Naive thymus-derived CD4-positive, alpha-beta T cell (primary cell): ENCODE measurements at regions of chr17 and their contacts with region 1.

Region 1: GRCh38 chr17:39754161-39754951 is 16.6 kb downstream of the GRB7 start:
- DNase-seq: peak; percentile 94 to 99 (median 99)
- ATAC-seq: peak; percentile 90
- H3K4me3 ChIP-seq: peak overlapping the region; percentile 76
- H3K4me3 Mint-ChIP-seq: peak overlapping the region; percentile 63 to 92 (median 82)
- H3K27ac ChIP-seq: peak overlapping the region; percentile 87
- H3K27ac Mint-ChIP-seq: peak overlapping the region; percentile 87 to 99 (median 97)
- H3K4me1 ChIP-seq: peaks cover 43 to 59% of the 10 kb centered on the region in 2 donors
- H3K4me1 Mint-ChIP-seq: peaks cover 37 to 59% (median 53%) of the 10 kb centered on the region in 7 donors
- H3K27me3 ChIP-seq: no peaks in the 10 kb centered on the region
- H3K27me3 Mint-ChIP-seq: no peaks in the 10 kb centered on the region

Region 2: GRCh38 chr17:39527220-39527813 is 227.0 kb before region 1 on chr17:
- CTCF ChIA-PET with region 1: no interaction called
- POLR2A ChIA-PET with region 1: no interaction called
- intact Hi-C with region 1: loop called in 1 of 2 experiments (anchors 1 kb)
- DNase-seq: peak in 5 of 9 donors; percentile 9 to 25 (median 16)
- ATAC-seq: no peak
- H3K4me3 ChIP-seq: no peak overlapping the region
- H3K4me3 Mint-ChIP-seq: no peak overlapping the region
- H3K27ac ChIP-seq: no peak overlapping the region
- H3K27ac Mint-ChIP-seq: no peak overlapping the region
- H3K4me1 ChIP-seq: no peaks in the 10 kb centered on the region
- H3K4me1 Mint-ChIP-seq: peaks cover 0 to 7% (median 0%) of the 10 kb centered on the region in 7 donors
- H3K27me3 ChIP-seq: no peaks in the 10 kb centered on the region
- H3K27me3 Mint-ChIP-seq: no peaks in the 10 kb centered on the region

Region 3: GRCh38 chr17:39668199-39668966 is 86.0 kb before region 1 on chr17 and contains the start of gene PNMT:
- CTCF ChIA-PET with region 1: no interaction called
- POLR2A ChIA-PET with region 1: no interaction called
- intact Hi-C with region 1: loop called in 1 of 2 experiments (anchors 1 kb)
- DNase-seq: peak; percentile 44 to 76 (median 63)
- ATAC-seq: peak; percentile 83
- H3K4me3 ChIP-seq: peak within 1 kb of the TSS; percentile 50
- H3K4me3 Mint-ChIP-seq: peak within 1 kb of the TSS; percentile 50 to 83 (median 68)
- H3K27ac ChIP-seq: peak within 1 kb of the TSS; percentile 51
- H3K27ac Mint-ChIP-seq: peak within 1 kb of the TSS in 1 of 9 donors; percentile 26
- H3K4me1 ChIP-seq: peaks cover 4 to 13% of the 10 kb centered on the region in 2 donors
- H3K4me1 Mint-ChIP-seq: peaks cover 5 to 23% (median 14%) of the 10 kb centered on the region in 7 donors
- H3K27me3 ChIP-seq: no peaks in the 10 kb centered on the region
- H3K27me3 Mint-ChIP-seq: peaks cover 0 to 48% (median 5%) of the 10 kb centered on the region in 5 donors
- total RNA-seq, gene PNMT: 0.42 to 0.89 (median 0.50) TPM in 4 of 5 experiments, not detected in the other

Region 4: GRCh38 chr17:39777534-39778365 is 23.4 kb after region 1 on chr17:
- CTCF ChIA-PET with region 1: interaction called, 14 read pairs
- POLR2A ChIA-PET with region 1: interaction called, 21 read pairs
- intact Hi-C with region 1: loop called in 1 of 2 experiments (anchors 1 kb)
- DNase-seq: peak in 1 of 9 donors; percentile 40
- ATAC-seq: peak; percentile 72
- H3K4me3 ChIP-seq: peak overlapping the region; percentile 74
- H3K4me3 Mint-ChIP-seq: peak overlapping the region; percentile 79 to 95 (median 90)
- H3K27ac ChIP-seq: peak overlapping the region; percentile 77
- H3K27ac Mint-ChIP-seq: peak overlapping the region; percentile 68 to 98 (median 94)
- H3K4me1 ChIP-seq: peaks cover 61 to 75% of the 10 kb centered on the region in 2 donors
- H3K4me1 Mint-ChIP-seq: peaks cover 60 to 91% (median 86%) of the 10 kb centered on the region in 7 donors
- H3K27me3 ChIP-seq: no peaks in the 10 kb centered on the region
- H3K27me3 Mint-ChIP-seq: no peaks in the 10 kb centered on the region

Region 5: DNA sequence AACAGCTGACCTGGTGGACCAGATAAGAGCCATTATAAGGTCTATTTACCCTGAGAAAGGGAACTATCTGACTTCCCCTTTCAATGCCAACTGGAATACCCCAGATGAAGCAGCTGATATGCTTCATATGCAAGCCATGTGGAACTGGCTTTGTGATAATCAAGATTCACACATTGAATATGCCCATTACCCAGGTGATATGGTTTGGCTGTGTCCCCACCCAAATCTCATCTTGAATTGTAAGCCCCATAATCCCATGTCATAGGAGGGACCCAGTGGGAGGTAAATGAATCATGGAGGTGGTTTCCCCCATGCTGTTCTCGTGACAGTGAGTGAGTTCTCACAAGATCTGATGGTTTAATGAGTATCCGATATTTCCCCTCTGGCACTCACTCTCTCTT is 67.7 kb after region 1 on chr17:
- CTCF ChIA-PET with region 1: interaction called, 10 read pairs
- POLR2A ChIA-PET with region 1: interaction called, 16 read pairs
- intact Hi-C with region 1: loop called in 1 of 2 experiments (anchors 2 kb)
- DNase-seq: no peak
- ATAC-seq: no peak
- H3K4me3 ChIP-seq: no peak overlapping the region
- H3K4me3 Mint-ChIP-seq: peak overlapping the region in 3 of 10 donors; percentile 55 to 73 (median 67)
- H3K27ac ChIP-seq: peak overlapping the region; percentile 61
- H3K27ac Mint-ChIP-seq: peak overlapping the region in 8 of 9 donors; percentile 79 to 97 (median 93)
- H3K4me1 ChIP-seq: peaks cover 44 to 50% of the 10 kb centered on the region in 2 donors
- H3K4me1 Mint-ChIP-seq: peaks cover 26 to 66% (median 48%) of the 10 kb centered on the region in 7 donors
- H3K27me3 ChIP-seq: no peaks in the 10 kb centered on the region
- H3K27me3 Mint-ChIP-seq: no peaks in the 10 kb centered on the region

Region 6: GRCh38 chr17:39904990-39905288 is 150.6 kb after region 1 on chr17:
- CTCF ChIA-PET with region 1: no interaction called
- POLR2A ChIA-PET with region 1: no interaction called
- intact Hi-C with region 1: no loop called
- DNase-seq: no peak
- ATAC-seq: no peak
- H3K4me3 ChIP-seq: no peak overlapping the region
- H3K4me3 Mint-ChIP-seq: peak overlapping the region in 1 of 10 donors; percentile 63
- H3K27ac ChIP-seq: no peak overlapping the region
- H3K27ac Mint-ChIP-seq: peak overlapping the region in 1 of 9 donors; percentile 66
- H3K4me1 ChIP-seq: peaks cover 10% of the 10 kb centered on the region in 2 donors
- H3K4me1 Mint-ChIP-seq: peaks cover 0 to 38% (median 16%) of the 10 kb centered on the region in 7 donors
- H3K27me3 ChIP-seq: no peaks in the 10 kb centered on the region
- H3K27me3 Mint-ChIP-seq: no peaks in the 10 kb centered on the region

Region 7: DNA sequence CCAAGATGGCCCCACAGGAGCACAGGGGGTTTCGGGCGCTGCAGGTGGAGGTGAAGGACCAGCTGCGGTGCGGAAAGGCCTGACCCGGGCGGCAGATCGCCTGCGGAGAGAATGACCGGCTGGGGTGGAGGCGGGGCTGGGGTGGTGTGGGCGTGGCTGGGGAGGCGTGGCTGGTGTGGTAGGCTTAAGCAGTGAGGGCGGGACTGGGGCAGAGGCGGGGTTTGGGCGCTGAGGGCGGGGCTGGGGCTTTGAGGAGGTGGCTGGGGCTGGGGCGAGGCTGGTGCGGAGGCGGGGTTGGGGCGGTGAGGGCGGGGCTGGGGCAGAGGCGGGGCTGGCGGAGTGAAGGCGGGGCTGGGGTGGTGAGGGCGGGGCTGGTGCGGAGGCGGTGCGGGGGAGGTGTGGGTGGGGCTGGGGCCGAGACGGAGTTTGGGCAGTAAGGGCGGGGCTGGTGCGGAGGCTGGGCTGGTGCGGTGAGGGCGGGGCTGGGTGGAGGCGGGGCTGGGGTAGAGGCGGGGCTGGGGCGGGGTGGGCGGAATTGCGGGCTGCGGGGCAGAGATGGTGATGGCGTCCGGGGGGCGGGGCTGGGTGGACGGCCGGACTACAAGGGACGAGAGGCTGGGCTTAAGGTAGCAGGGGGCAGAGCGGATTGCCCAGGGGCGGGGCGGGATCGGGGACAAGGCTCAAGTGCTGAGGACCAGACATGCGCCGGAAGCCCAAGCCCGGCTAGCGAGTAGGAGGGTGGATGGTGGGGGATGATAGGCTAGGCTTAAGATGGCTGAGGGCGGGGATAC is 198.5 kb after region 1 on chr17:
- CTCF ChIA-PET with region 1: no interaction called
- POLR2A ChIA-PET with region 1: no interaction called
- intact Hi-C with region 1: loop called in 1 of 2 experiments (anchors 1 kb)
- DNase-seq: peak; percentile 81 to 98 (median 90)
- ATAC-seq: peak; percentile 94
- H3K4me3 ChIP-seq: peak overlapping the region; percentile 71
- H3K4me3 Mint-ChIP-seq: peak overlapping the region; percentile 68 to 93 (median 82)
- H3K27ac ChIP-seq: peak overlapping the region; percentile 74
- H3K27ac Mint-ChIP-seq: peak overlapping the region; percentile 28 to 87 (median 72)
- H3K4me1 ChIP-seq: peaks cover 5 to 18% of the 10 kb centered on the region in 2 donors
- H3K4me1 Mint-ChIP-seq: peaks cover 1 to 43% (median 27%) of the 10 kb centered on the region in 7 donors
- H3K27me3 ChIP-seq: no peaks in the 10 kb centered on the region
- H3K27me3 Mint-ChIP-seq: peaks cover 0 to 7% (median 0%) of the 10 kb centered on the region in 5 donors